ENCODE measurements at regions of chr17 and their contacts with region 1.

Region 1: DNA sequence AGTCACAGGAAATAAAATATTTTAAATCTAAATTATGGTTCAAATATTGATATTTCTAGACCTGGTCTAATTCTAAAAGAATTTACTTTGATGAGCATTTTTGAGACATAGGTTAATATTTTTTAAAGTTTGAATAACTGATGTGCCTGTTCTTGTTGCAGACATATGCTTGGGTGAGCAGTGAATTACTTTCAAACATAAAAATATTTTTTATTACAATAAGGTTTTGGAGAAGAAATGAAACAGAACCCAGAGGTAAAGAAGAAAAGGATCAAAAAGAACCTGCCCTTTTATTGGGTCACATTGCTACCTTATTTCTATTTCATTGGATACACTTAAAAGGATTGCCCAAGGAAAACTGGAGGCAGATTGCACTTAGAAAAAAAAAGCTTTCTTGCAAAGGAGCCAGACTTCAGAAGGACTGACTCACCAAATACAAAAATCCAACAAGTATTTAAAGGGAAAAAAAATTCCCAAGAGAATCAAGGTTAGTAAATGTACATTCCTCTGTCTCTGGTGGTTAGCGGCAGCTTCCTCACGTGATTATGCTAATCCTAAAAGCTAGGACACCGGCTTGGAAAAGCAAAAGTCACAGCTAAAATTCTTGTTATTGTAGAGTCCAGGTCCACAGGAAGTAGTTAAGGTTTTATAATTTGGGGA is 18.5 kb downstream of the ENPP7 start:
- DNase-seq: no peak
- H3K4me3 Mint-ChIP-seq: no peak overlapping the region
- H3K27ac Mint-ChIP-seq: no peak overlapping the region
- H3K4me1 Mint-ChIP-seq: peaks cover 24% of the 10 kb centered on the region
- H3K27me3 Mint-ChIP-seq: peaks cover 45% of the 10 kb centered on the region

Region 2: GRCh38 chr17:79777894-79778503 is 28.7 kb after region 1 on chr17 and contains the start of gene CBX2:
- CTCF ChIA-PET with region 1: interaction called, 6 read pairs
- POLR2A ChIA-PET with region 1: interaction called, 3 read pairs
- intact Hi-C with region 1: loop called (anchors 2 kb)
- DNase-seq: peak; percentile 86
- H3K4me3 Mint-ChIP-seq: peak within 1 kb of the TSS; percentile 77
- H3K27ac Mint-ChIP-seq: peak within 1 kb of the TSS; percentile 47
- H3K4me1 Mint-ChIP-seq: peaks cover 14% of the 10 kb centered on the region
- H3K27me3 Mint-ChIP-seq: peaks cover 71% of the 10 kb centered on the region
- total RNA-seq, gene CBX2: 2.5 to 3.1 TPM

Region 3: GRCh38 chr17:79796763-79797491 is 47.6 kb after region 1 on chr17 and contains the start of gene CBX8:
- CTCF ChIA-PET with region 1: interaction called, 5 read pairs
- POLR2A ChIA-PET with region 1: no interaction called
- intact Hi-C with region 1: loop called (anchors 5 kb)
- DNase-seq: peak; percentile 100
- H3K4me3 Mint-ChIP-seq: peak within 1 kb of the TSS; percentile 76
- H3K27ac Mint-ChIP-seq: peak within 1 kb of the TSS; percentile 69
- H3K4me1 Mint-ChIP-seq: peaks cover 29% of the 10 kb centered on the region
- H3K27me3 Mint-ChIP-seq: peaks cover 35% of the 10 kb centered on the region
- total RNA-seq, gene CBX8: 4.5 to 4.6 TPM

Region 4: DNA sequence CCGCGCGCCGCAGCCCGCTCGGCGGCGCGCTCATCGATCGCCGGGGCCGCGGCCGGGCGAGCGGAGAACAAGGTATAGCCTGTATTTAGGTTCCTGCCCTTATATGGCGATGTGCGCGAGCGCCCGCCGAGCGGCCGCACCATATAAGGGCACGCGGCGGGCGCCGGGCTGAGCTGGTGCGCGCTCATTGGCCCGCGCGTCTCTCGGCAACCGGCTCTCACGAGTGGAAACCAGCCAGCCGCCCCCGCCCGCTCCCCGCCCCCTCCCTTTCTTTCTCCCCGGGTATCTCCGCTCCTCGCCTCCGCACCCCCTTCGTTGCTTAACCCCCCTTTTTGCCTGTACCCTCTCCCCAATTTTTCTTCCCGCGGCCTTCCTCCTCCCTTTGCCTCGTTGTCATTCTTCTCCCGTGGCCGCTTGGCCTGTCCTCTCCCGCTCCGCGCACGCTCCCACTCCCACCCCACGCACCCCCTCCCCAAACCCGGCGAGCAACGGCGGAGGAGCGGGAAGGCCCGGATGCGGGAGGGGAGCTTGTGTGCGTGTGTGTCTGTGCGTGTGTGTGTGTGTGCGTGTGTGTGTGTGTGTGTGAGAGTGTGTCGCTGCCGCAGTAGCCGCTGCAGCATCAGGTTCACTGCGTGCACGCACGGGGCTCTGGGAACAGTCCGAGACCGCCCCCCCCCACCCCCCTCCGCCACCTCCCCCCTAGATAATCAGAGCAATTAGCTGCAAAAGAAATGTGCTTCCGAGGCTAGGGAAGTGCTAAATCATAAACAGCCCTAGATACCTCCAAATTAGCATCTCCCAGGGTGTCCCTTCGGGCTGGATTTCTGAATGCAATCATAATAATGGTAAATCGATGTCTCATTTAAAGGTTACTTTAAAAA is 61.1 kb after region 1 on chr17:
- CTCF ChIA-PET with region 1: interaction called, 6 read pairs
- POLR2A ChIA-PET with region 1: no interaction called
- intact Hi-C with region 1: loop called (anchors 2 kb)
- DNase-seq: peak; percentile 87
- H3K4me3 Mint-ChIP-seq: peak overlapping the region; percentile 23
- H3K27ac Mint-ChIP-seq: no peak overlapping the region
- H3K4me1 Mint-ChIP-seq: peaks cover 33% of the 10 kb centered on the region
- H3K27me3 Mint-ChIP-seq: peaks cover 64% of the 10 kb centered on the region

Region 5: GRCh38 chr17:79874329-79874981 is 125.2 kb after region 1 on chr17:
- CTCF ChIA-PET with region 1: no interaction called
- POLR2A ChIA-PET with region 1: no interaction called
- intact Hi-C with region 1: no loop called
- DNase-seq: no peak
- H3K4me3 Mint-ChIP-seq: no peak overlapping the region
- H3K27ac Mint-ChIP-seq: no peak overlapping the region
- H3K4me1 Mint-ChIP-seq: peaks cover 4% of the 10 kb centered on the region
- H3K27me3 Mint-ChIP-seq: peaks cover 14% of the 10 kb centered on the region

Region 6: GRCh38 chr17:79887451-79887991 is 138.2 kb after region 1 on chr17:
- CTCF ChIA-PET with region 1: no interaction called
- POLR2A ChIA-PET with region 1: no interaction called
- intact Hi-C with region 1: no loop called
- DNase-seq: no peak
- H3K4me3 Mint-ChIP-seq: no peak overlapping the region
- H3K27ac Mint-ChIP-seq: no peak overlapping the region
- H3K4me1 Mint-ChIP-seq: no peaks in the 10 kb centered on the region
- H3K27me3 Mint-ChIP-seq: peaks cover 45% of the 10 kb centered on the region

Region 7: DNA sequence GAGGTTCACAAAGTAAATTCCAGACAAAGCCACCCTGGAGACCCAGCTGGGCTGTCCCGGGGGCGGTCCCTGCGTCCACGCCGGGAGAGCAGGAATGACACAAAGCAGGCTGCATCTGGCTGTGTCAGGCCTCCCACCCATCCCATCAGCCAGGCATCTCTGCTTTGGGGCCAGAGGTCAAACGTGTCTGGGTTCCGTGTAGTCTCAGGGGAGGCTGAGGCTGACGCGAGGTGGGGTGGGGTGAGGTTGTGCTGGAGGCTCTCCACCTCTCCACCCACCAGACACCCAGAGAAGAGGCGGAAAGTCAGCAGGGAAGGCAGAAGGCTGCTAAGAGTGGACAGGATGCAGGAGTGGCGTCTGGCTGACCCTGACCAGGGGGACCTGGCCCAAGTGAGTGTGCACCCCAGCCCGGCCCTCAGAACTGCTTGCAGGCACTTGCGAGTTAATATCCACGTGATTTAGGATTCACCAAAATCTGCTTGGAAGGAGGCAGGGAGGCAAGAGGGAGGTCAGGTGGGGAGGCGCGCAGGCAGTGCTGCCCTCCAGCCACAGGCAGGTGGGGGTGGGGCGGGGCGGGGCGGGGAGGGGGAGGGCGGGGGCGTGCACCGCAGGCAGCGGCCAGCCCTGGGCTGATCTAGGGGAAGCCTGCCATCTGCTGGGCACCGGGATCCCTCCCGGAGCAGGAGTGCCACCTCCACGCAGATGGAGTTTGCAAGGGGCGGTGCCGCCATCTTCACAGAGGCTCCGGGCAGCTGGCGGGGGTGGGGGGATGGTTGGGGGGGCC is 242.0 kb after region 1 on chr17:
- CTCF ChIA-PET with region 1: interaction called, 6 read pairs
- POLR2A ChIA-PET with region 1: interaction called, 3 read pairs
- intact Hi-C with region 1: loop called (anchors 5 kb)
- DNase-seq: peak; percentile 91
- H3K4me3 Mint-ChIP-seq: peak overlapping the region; percentile 71
- H3K27ac Mint-ChIP-seq: no peak overlapping the region
- H3K4me1 Mint-ChIP-seq: peaks cover 26% of the 10 kb centered on the region
- H3K27me3 Mint-ChIP-seq: no peaks in the 10 kb centered on the region

Measured in activated CD4-positive, alpha-beta memory T cell treated with anti-CD3 and anti-CD28 coated beads for 36 hours (primary cell).